Activated CD8-positive, alpha-beta T cell treated with anti-CD3 and anti-CD28 coated beads for 36 hours (primary cell): ENCODE measurements at regions of chr1 and their contacts with region 1.

Region 1: DNA sequence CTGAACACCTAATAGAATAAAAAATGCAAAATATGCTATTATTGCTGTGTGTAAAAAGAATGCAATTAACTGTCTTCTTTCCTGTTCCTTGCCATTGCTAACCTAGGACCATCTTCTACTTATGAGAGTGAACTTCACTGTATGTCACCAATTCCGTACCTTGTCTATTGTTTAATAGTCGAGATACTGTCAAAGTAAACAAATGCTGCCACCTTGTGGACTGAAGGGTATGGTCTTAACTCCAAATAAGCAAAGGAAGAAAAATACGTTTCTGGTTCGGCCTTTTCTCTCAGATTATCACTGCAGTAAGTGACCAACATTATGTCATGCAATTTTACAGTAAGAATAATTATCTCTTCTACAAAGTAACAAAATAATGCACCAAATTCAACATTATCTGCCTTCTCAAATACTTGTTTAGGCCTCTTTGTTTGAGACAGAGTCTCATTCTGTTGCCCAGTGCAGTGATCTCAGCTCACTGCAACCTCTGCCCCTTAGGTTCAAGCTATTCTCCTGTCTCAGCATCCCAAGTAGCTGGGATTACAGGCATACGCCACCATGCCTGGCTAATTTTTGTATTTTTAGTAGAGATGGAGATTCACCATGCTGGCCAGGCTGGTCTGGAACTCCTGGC is 133.4 kb downstream of the COP1 start:
- DNase-seq: peak; percentile 55
- ATAC-seq: no peak
- H3K4me3 Mint-ChIP-seq: no peak overlapping the region
- H3K27ac Mint-ChIP-seq: no peak overlapping the region
- H3K4me1 Mint-ChIP-seq: peaks cover 14% of the 10 kb centered on the region
- H3K27me3 Mint-ChIP-seq: no peaks in the 10 kb centered on the region
- CTCF ChIP-seq: peak; percentile 73

Region 2: GRCh38 chr1:176206961-176207902 is 133.6 kb after region 1 on chr1 and contains the start of gene COP1:
- CTCF ChIA-PET with region 1: no interaction called
- POLR2A ChIA-PET with region 1: no interaction called
- intact Hi-C with region 1: loop called (anchors 5 kb)
- DNase-seq: peak; percentile 97
- ATAC-seq: peak; percentile 84
- H3K4me3 Mint-ChIP-seq: peak within 1 kb of the TSS; percentile 87
- H3K27ac Mint-ChIP-seq: peak within 1 kb of the TSS; percentile 98
- H3K4me1 Mint-ChIP-seq: peaks cover 25% of the 10 kb centered on the region
- H3K27me3 Mint-ChIP-seq: no peaks in the 10 kb centered on the region
- CTCF ChIP-seq: no peak
- total RNA-seq, gene COP1: 33.8 to 36.9 TPM